ENCODE measurements at regions of chr11 and their contacts with region 1.

Region 1: DNA sequence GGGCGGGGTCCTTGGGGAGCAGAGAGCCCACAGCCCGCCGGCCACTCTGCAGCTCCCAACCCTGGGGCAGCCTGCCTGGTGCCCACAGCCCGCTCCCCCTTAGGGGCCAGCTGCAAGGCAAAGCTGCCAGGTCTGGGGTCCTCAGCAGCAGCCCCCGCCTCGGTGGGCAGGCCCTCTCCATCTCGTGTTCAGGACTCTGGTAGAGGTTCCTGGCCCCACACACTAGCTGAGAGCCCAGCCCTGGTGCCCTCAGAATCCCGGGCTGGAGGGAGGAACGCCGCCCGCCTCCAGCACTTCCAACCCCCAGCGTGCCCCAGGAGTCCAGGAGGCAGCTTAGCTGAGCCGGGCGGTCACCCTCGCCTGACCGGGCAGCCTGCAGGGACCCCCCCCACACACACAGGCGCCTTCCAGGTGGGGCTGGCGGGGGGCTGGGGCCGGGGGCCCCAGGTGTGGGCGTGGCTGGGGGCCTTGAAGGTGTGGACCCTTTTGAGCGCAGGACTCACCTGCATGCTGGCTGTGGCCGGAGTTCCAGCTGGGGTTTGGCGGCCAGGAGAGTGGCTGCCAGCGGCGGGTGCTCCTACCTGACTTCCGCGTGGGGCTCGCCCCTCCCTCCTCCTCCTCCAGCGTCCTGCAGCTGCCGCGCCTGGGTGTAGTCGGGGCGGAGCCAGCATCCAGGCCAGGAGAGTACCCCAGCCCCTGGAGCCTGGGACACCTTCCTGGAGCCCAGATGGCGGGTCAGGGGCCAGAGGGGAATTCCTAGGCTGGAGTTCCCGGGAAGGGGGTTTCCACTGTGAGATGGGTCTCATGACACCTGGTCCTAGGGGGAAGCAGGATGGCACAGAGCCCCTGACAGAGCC is at the start of gene ANO9:
- DNase-seq: peak in 1 of 2 experiments; percentile 77
- H3K4me3 ChIP-seq: peak within 1 kb of the TSS; percentile 8 to 63 (median 38); a peak in 7 of 8 replicates
- H3K27ac ChIP-seq: no peak within 1 kb of the TSS
- H3K4me1 ChIP-seq: peaks cover 0 to 18% (median 7%) of the 10 kb centered on the region in 4 experiments; a peak in 5 of 7 replicates
- H3K27me3 ChIP-seq: no peaks in the 10 kb centered on the region
- CTCF ChIP-seq: no peak
- EP300 ChIP-seq: no peak
- POLR2A ChIP-seq: peak in 1 of 2 experiments; percentile 50; a peak in 1 of 3 replicates
- RAD21 ChIP-seq: no peak
- total RNA-seq, gene ANO9: 18.0 and 20.0 TPM in 2 replicates

Region 2: DNA sequence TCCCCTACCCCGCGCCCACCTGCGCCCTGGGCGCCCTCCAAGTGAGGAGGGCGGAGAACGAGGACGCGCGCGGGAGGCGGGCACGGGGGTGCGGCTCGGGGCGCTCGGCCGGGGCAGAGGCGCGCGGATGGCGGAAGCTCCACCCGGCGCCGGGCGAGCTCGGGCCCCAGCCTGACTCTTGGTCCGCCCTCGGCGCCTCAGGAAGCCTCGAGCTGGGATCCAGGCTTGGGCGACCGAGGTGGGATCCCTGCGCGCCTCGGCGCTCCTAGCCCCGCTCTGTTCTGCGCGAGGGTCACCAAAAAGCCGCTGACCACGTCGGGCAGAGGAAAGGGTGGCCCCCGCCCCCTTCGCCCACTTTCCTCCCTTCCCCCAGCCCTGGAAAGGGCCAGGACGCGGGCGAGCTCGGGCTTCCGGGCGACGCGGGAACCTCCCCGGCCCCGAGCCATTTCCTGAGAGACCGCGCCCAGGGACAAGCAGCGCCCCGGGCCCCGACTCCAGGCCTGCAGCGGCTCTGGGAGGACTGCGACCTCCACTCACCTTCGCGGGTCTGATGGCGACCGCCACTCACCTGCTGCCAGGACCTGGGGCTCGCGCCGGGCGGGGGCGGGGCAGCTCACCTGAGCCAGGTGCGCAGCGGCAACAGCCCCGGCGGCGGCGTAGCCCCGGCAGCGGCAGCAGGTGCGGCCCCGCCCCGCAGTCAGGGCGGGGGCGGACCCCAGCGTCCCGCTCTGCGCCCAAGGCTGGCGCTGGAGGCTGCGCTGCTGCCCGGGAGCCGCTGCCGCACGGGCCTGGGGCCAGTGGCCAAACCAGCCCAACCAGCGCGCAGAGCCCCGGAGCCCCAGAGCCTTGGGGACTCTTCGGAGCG is 24.7 kb before region 1 on chr11:
- CTCF ChIA-PET with region 1: interaction called, 4 read pairs
- POLR2A ChIA-PET with region 1: interaction called, 33 read pairs
- DNase-seq: peak; percentile 50 to 90
- H3K4me3 ChIP-seq: peak overlapping the region; percentile 54 to 92 (median 62)
- H3K27ac ChIP-seq: peak overlapping the region; percentile 42; the same call in 1 of the 2 replicates
- H3K4me1 ChIP-seq: peaks cover 0 to 26% (median 16%) of the 10 kb centered on the region in 4 experiments; a peak in 6 of 7 replicates
- H3K27me3 ChIP-seq: peaks cover 0 to 13% (median 4%) of the 10 kb centered on the region in 4 experiments; a peak in 5 of 7 replicates
- CTCF ChIP-seq: no peak
- EP300 ChIP-seq: no peak
- POLR2A ChIP-seq: no peak; a peak in 2 of 3 replicates
- RAD21 ChIP-seq: peak in 1 of 2 experiments; percentile 3; a peak in 1 of 4 replicates

Region 3: GRCh38 chr11:472272-472671 is 30.6 kb after region 1 on chr11:
- CTCF ChIA-PET with region 1: interaction called, 13 read pairs
- POLR2A ChIA-PET with region 1: interaction called, 5 read pairs
- DNase-seq: peak in 1 of 2 experiments; percentile 49
- H3K4me3 ChIP-seq: no peak overlapping the region
- H3K27ac ChIP-seq: no peak overlapping the region
- H3K4me1 ChIP-seq: peaks cover 0 to 10% (median 6%) of the 10 kb centered on the region in 4 experiments; a peak in 6 of 7 replicates
- H3K27me3 ChIP-seq: no peaks in the 10 kb centered on the region
- CTCF ChIP-seq: peak in 1 of 3 experiments; percentile 52; a peak in 2 of 4 replicates
- EP300 ChIP-seq: no peak
- POLR2A ChIP-seq: no peak
- RAD21 ChIP-seq: no peak; a peak in 1 of 4 replicates